Dorsolateral prefrontal cortex (tissue), 120 donors: ENCODE measurements at regions of chr5 and their contacts with region 1.

Region 1: GRCh38 chr5:173615884-173616576 is 420 bp downstream of the BOD1 start:
- DNase-seq: peak; percentile 37 to 85 (median 66)
- H3K4me3 ChIP-seq: peak overlapping the region; percentile 77 to 99 (median 92)
- H3K27ac ChIP-seq: peak overlapping the region; percentile 42 to 97 (median 88)
- H3K27me3 ChIP-seq: no peaks in the 10 kb centered on the region
- CTCF ChIP-seq: peak; percentile 30 to 78 (median 62)

Region 2: GRCh38 chr5:173868076-173868880 is 252.2 kb after region 1 on chr5:
- intact Hi-C with region 1: loop called in 1 of 2 experiments (anchors 2 kb)
- DNase-seq: no peak
- H3K4me3 ChIP-seq: no peak overlapping the region
- H3K27ac ChIP-seq: peak overlapping the region; percentile 53 to 100 (median 97)
- H3K27me3 ChIP-seq: no peaks in the 10 kb centered on the region
- CTCF ChIP-seq: no peak

Region 3: DNA sequence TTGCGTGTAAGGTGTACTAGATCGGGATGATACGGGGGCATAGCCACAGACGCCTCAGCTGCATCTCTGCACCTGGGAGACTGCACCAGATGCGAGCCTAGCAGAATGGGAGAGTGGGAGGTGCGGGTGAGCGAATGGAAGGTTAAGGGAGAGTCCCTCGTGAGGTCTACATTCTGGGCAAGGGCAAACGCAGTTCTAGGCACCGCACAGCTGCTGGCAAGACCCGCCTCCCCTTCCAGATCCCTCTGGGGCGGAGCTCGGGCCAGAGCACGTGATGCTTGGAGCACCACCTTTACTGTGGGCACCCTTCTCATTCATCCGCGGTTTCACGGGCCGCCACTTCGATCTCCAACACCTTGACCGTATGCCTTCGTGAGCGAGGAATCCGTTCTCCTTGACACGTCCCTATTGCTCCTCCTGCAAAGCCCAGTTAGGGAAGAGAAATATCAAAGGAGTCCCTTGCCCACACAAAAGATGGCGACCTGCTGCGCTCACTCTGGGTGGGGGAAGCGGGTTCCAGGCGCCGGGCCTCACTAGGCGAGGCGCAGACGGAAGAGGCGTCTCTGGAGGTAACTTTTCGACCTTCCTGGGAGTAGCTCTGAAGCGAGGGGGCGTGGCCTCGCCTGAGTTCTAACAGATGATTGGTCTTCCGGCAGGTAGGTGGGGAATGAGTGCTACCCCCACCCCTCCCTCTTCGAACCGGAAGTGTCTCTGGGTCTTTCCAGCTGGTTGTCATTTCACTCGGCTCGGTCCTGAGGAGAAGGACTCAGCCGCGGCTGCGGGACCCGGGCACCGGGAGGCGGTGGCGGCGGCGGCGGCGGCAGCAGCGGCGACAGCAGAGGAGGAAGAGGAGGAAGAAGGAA is 271.8 kb after region 1 on chr5 and contains the start of gene CPEB4:
- intact Hi-C with region 1: loop called (anchors 1 to 5 kb)
- DNase-seq: peak; percentile 98 to 100 (median 100)
- H3K4me3 ChIP-seq: peak within 1 kb of the TSS; percentile 60 to 99 (median 91)
- H3K27ac ChIP-seq: peak within 1 kb of the TSS; percentile 84 to 100 (median 98)
- H3K27me3 ChIP-seq: no peaks in the 10 kb centered on the region
- CTCF ChIP-seq: peak in 18 of 56 donors; percentile 4 to 40 (median 26)
- total RNA-seq, gene CPEB4: 95.3 to 182 (median 133) TPM

Region 4: DNA sequence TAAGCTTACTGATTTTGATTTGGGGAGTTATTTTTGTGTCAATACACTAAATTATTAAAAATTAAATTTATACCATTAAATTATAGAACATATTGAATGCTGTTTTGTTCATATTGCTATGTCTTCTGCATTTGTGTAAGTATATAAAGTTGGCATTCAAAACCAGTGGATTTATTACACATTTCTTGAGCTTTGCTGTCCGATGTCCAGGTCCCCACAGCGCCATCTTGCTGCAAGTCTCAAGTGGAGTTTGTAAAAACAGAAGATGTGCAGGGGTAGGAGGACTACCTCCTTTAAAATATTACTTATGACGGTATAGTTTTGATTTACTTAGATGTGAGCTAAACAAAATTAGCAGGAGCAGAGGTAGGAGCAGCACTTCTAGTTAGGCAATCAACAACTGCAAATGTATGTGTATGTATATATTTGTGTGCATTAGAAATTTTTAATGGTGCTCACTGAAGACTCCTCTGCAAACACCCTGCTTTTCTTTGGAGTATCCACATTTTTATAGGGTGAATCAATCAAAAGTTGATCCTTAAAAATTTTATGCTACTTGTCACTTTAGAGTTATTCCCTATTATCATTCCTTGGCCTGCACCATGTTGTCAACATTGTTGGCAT is 309.5 kb after region 1 on chr5:
- intact Hi-C with region 1: no loop called
- DNase-seq: peak in 7 of 10 donors; percentile 55 to 83 (median 67)
- H3K4me3 ChIP-seq: peak overlapping the region in 8 of 59 donors; percentile 2 to 30 (median 6)
- H3K27ac ChIP-seq: peak overlapping the region in 55 of 59 donors; percentile 16 to 94 (median 83)
- H3K27me3 ChIP-seq: no peaks in the 10 kb centered on the region
- CTCF ChIP-seq: peak; percentile 35 to 75 (median 62)

Region 5: DNA sequence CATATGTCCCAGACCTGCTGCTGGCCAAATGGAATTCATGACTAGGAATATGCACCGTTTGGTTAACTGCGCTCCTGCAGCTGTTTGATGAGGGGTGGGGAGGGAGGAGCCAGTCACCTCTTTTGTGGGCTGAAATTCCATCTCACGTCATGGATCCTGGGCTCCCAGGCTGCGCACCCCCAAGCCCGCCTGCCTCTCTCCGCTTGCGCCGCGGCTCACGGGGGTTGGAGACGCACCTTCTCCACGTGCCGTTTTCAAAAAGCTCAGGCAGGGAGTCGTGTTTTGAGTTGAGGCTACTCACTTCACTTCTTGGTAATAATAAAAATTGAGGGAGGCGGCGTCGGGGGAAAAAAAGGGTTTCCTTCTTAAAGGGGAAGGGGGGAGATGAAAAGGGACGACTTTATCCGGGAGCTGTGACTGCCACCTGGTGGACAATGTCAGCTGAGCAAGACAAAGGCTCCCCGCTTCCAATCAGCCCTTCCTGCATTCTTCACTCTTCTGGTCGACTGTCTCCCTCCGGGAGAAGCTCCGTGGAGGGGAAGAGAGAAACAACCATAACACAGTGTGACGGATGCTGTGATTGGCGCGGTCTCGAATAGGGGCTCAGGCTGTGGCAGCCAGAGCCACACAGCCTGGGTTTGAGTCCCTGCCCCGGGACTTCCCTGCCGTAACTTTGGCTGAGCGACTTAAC is 357.0 kb after region 1 on chr5:
- intact Hi-C with region 1: loop called (anchors 1 to 2 kb)
- DNase-seq: peak; percentile 74 to 93 (median 88)
- H3K4me3 ChIP-seq: peak overlapping the region; percentile 34 to 79 (median 64)
- H3K27ac ChIP-seq: peak overlapping the region in 55 of 59 donors; percentile 9 to 87 (median 69)
- H3K27me3 ChIP-seq: no peaks in the 10 kb centered on the region
- CTCF ChIP-seq: peak; percentile 83 to 98 (median 94)

Region 6: DNA sequence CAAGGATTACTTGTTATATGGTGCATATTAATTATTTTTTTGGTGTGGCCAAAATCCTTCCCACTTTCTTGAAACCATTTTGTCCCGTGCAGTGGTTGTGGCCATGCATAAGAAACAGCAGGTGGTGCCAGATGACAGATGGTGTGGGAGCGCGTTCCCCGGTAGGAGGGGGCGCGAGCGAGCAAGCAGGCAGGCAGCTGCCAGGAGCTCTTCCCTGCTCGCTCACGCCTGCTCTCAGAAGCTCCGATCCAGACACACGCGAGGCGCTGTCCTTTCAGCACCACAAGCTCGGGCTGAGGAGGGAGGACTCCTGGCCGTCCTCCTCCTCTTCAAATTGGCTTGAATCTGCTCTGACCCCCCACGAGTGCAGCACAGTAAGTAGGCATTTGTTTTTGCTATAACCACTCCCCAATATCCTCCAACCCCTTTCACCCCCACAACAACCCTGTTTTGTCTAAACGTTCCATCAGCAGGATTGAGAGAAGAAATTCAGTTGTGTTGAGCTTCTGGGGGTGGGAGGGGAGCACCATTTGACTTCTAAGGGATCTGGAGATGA is 429.5 kb after region 1 on chr5 and contains the start of gene NSG2:
- intact Hi-C with region 1: loop called in 1 of 2 experiments (anchors 10 kb)
- DNase-seq: peak; percentile 75 to 95 (median 92)
- H3K4me3 ChIP-seq: peak within 1 kb of the TSS in 58 of 59 donors; percentile 7 to 68 (median 48)
- H3K27ac ChIP-seq: peak within 1 kb of the TSS in 48 of 59 donors; percentile 3 to 84 (median 60)
- H3K27me3 ChIP-seq: peaks cover 0 to 6% (median 0%) of the 10 kb centered on the region in 45 donors
- CTCF ChIP-seq: peak; percentile 59 to 99 (median 94)
- total RNA-seq, gene NSG2: 56.1 to 461 (median 222) TPM

Region 7: DNA sequence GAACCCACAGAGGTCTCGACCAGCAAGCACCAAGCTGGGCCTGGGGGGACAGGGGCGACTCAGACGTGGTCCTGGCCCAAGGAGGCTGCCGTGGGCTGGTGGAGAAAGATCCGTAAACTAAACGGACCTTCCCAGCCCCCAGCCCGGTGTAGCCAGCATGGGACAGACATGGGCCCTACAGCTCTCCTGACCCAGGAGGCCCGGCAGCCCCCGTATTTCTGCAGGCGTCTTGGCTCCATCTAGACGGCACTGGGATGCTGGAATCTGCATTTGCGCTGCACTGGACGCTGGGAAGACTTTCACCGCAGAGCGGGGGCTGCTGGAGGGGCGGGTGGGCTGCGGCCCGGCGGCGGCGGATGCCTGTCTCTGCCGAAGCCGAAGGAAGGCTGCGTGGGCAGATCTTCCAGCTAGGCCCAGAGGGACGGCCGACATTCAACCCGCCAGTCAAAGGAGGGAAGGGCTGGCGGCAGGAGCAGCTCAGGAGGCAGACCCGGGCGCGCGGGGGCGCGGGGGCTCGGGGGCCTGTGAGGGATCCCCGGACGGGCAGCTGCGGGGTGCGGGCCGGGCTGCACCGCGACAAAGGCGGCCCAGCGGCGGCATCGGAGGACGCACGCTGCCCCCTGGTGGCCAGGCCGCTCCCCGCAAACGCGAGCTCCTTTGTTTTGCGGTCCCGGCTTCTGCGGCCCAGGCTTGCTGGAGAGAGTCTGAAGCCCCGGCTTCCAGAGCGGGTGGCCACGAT is 695.7 kb after region 1 on chr5:
- intact Hi-C with region 1: loop called (anchors 2 to 5 kb)
- DNase-seq: peak; percentile 67 to 88 (median 78)
- H3K4me3 ChIP-seq: peak overlapping the region; percentile 26 to 69 (median 56)
- H3K27ac ChIP-seq: peak overlapping the region in 24 of 59 donors; percentile 3 to 86 (median 52)
- H3K27me3 ChIP-seq: no peaks in the 10 kb centered on the region
- CTCF ChIP-seq: peak; percentile 77 to 98 (median 93)

Region 8: GRCh38 chr5:174317259-174317894 is 701.3 kb after region 1 on chr5:
- intact Hi-C with region 1: loop called (anchors 2 to 5 kb)
- DNase-seq: peak in 8 of 10 donors; percentile 38 to 80 (median 70)
- H3K4me3 ChIP-seq: peak overlapping the region in 21 of 59 donors; percentile 5 to 48 (median 29)
- H3K27ac ChIP-seq: no peak overlapping the region
- H3K27me3 ChIP-seq: peaks cover 0 to 8% (median 0%) of the 10 kb centered on the region in 45 donors
- CTCF ChIP-seq: peak; percentile 52 to 92 (median 81)